Sciatic nerve (tissue), 2 donors: ENCODE measurements at regions of chr13 and their contacts with region 1.

Region 1: DNA sequence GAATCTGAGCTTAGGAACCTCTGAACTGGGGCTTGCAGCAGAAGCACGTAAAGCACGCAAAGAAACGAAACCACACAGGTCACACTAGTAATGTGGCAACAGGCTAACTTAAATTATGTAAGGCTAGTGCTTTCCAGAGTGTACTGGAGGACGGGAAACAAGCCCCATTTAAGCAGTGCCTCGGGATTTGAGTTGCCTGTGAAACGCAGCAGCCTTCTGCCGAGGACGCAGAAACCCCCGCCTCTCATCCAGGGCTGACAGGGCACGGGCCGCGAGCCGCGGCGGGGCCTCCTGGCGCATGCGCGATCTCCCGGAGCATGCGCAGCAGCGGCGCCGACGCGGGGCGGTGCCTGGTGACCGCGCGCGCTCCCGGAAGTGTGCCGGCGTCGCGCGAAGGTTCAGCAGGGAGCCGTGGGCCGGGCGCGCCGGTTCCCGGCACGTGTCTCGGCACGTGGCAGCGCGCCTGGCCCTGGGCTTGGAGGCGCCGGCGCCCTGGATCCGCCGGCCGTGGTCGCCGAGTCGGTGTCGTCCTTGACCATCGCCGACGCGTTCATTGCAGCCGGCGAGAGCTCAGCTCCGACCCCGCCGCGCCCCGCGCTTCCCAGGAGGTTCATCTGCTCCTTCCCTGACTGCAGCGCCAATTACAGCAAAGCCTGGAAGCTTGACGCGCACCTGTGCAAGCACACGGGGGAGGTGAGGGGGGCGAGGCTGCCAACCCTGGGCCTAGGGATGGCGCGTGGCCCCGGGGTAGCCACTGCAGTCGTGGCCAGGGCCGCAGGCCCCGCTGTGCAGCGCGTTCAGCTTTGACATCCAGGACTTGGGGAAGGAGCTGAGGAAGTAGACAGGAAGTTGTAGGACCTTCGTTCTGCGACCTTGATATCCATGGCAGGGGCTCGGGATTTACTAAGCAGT is at the start of gene GTF3A:
- DNase-seq: peak; percentile 90
- ATAC-seq: peak; percentile 96
- total RNA-seq, gene GTF3A: 52.2 TPM

Region 2: GRCh38 chr13:26785838-26786630 is 638.5 kb before region 1 on chr13:
- intact Hi-C with region 1: loop called (anchors 5 kb)
- DNase-seq: no peak
- ATAC-seq: peak; percentile 50

Region 3: GRCh38 chr13:27607125-27607524 is 182.6 kb after region 1 on chr13:
- intact Hi-C with region 1: no loop called
- DNase-seq: no peak
- ATAC-seq: no peak

Region 4: GRCh38 chr13:27704681-27705080 is 280.2 kb after region 1 on chr13:
- intact Hi-C with region 1: no loop called
- DNase-seq: no peak
- ATAC-seq: no peak